ENCODE measurements at regions of chrX and their contacts with region 1.

Region 1: DNA sequence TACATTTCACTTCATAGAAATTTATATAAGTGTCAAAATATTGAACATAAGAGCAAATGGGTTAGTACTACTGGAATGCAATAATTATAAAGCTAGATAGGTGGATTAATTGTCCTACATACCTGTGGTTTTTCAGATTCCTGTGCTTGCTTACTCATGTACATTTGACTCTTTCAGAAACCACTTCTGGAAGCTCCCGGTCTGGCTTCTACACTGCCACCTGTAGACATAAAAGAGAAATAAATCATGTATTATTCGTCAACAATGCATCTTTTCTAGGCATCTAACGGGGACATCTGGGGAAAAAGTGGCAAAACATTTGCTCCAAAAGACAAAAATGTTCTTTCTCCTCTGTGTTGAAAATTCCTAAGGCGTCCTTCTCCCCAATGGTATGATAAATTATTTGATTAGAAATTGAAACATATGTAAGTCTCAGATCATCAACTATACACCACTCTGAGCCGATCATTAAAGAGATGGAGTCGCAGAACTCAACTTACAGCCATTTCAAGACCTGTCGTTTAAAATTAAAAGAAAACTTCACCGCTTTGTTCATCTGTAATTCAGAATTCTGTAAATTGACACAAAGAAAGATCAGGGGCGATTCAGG is 648.7 kb upstream of the DIPK2B start:
- DNase-seq: no peak
- H3K4me3 Mint-ChIP-seq: peak overlapping the region; percentile 99
- H3K27ac Mint-ChIP-seq: peak overlapping the region; percentile 95
- H3K4me1 Mint-ChIP-seq: peaks cover 30% of the 10 kb centered on the region
- H3K27me3 Mint-ChIP-seq: no peaks in the 10 kb centered on the region

Region 2: DNA sequence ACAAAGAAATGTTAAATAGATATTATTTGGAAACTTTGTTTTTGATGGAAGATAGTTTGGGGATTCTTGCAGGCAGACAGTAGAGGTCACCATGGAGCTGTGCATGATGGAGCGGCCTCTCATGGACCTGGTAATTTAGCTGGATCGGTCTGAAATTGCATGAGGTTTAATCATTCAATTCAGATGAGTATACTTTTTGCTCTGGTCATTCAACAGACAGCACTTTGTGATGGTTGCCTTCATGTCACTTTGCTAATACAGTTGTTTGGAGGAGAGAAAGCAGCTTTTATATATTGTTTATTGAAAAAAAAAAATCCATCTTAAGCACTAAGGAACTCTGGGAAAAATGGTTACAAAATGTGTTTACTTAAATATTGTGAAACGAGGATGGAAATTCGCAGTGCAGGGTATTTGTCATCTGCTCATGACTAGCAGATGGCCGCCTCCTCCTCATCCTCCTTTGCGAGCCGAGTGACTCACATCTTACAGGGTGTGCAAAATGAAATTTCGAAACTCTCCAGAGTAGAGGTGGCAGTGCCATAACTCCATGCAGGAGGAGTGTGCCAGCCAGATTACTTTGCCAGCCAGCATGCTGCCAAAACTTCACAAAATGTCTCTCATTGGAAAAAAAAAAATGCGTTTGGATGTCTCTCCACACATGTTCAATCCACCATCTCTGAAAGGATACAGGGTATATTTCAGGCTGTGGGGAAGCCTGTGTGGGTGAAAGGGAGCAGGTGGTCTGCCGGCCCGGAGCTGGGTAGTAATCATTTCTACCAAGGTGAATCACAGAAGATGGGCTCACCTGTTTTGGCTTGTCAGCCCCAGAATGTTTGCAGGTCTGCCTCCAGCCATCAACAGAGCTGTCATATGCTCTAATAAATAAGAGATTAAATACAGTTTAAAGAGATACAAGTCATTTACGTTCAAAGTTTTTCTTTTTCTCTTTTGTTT is 333.8 kb before region 1 on chrX:
- intact Hi-C with region 1: loop called (anchors 5 kb)
- DNase-seq: peak; percentile 9
- H3K4me3 Mint-ChIP-seq: peak overlapping the region; percentile 42
- H3K27ac Mint-ChIP-seq: peak overlapping the region; percentile 55
- H3K4me1 Mint-ChIP-seq: peaks cover 23% of the 10 kb centered on the region
- H3K27me3 Mint-ChIP-seq: no peaks in the 10 kb centered on the region

Region 3: GRCh38 chrX:45710081-45710801 is 139.1 kb before region 1 on chrX:
- intact Hi-C with region 1: loop called (anchors 1 kb)
- DNase-seq: peak; percentile 12
- H3K4me3 Mint-ChIP-seq: no peak overlapping the region
- H3K27ac Mint-ChIP-seq: peak overlapping the region; percentile 87
- H3K4me1 Mint-ChIP-seq: peaks cover 44% of the 10 kb centered on the region
- H3K27me3 Mint-ChIP-seq: no peaks in the 10 kb centered on the region

Region 4: GRCh38 chrX:45806410-45807121 is 42.8 kb before region 1 on chrX:
- intact Hi-C with region 1: loop called (anchors 1 kb)
- DNase-seq: peak; percentile 42
- H3K4me3 Mint-ChIP-seq: peak overlapping the region; percentile 74
- H3K27ac Mint-ChIP-seq: peak overlapping the region; percentile 91
- H3K4me1 Mint-ChIP-seq: peaks cover 79% of the 10 kb centered on the region
- H3K27me3 Mint-ChIP-seq: no peaks in the 10 kb centered on the region

Region 5: DNA sequence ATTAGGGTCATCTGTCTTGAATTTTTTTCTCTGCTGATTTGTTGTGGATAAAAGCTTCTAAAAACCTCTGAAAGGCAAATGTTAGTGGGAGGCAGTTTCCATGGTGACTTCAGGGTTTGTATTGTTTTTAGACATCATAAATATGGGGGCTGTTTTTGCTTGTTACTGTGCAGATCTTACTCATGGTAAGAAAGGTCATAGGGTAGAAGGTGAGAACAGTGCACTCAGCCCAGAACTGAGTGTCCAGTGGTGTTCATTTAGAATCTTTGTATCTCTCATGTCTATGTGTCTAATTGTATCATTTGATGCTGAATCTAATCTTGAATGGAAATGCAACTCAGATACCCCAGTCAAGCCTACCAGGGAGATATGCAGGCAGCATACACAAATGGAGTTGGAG is 86.0 kb after region 1 on chrX:
- intact Hi-C with region 1: loop called (anchors 2 kb)
- DNase-seq: no peak
- H3K4me3 Mint-ChIP-seq: no peak overlapping the region
- H3K27ac Mint-ChIP-seq: peak overlapping the region; percentile 73
- H3K4me1 Mint-ChIP-seq: peaks cover 12% of the 10 kb centered on the region
- H3K27me3 Mint-ChIP-seq: no peaks in the 10 kb centered on the region

Region 6: GRCh38 chrX:46325312-46325877 is 476.0 kb after region 1 on chrX:
- intact Hi-C with region 1: loop called (anchors 2 kb)
- DNase-seq: peak; percentile 10
- H3K4me3 Mint-ChIP-seq: no peak overlapping the region
- H3K27ac Mint-ChIP-seq: peak overlapping the region; percentile 69
- H3K4me1 Mint-ChIP-seq: peaks cover 52% of the 10 kb centered on the region
- H3K27me3 Mint-ChIP-seq: no peaks in the 10 kb centered on the region